Head of caudate nucleus (tissue), 42 donors: ENCODE measurements at regions of chr11 and their contacts with region 1.

Region 1: DNA sequence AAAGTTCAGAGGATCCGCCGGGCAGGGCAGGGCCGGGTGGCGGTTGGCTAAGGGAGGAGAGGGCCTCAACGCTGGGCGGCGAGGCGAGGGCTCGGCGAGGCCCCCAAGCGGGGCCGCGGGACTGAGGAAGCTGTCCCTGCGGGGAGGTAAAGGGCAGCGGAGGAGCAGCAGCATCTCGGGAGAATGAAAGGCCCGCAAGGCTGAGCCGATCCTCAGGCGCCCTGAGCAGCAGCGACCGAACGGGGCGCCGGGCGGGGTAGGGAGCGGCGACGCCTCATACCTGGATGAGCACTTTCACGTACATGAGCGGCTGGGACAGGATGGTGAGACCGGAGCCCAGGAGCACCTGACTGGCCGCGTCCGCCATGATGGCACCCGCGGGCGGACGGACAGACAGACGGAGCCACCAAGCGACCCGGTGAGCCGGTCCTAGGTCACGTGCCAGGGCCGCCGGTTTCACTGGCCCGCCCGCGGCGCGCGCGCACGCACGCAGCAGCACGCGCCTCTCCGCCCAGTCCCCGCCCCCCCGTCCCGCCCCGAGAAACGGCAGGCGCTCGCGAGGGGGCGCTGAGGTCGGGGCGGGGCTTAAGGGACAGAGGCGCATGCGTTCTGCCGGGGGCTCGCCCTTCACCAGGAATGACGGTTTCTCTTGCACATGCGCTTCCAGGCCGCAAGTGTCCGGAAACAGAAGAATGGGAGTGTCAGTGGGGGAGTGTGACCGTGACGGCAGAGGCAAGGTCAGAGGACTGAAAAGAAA is at the start of gene MTCH2:
- DNase-seq: peak; percentile 89 to 98 (median 94)

Region 2: DNA sequence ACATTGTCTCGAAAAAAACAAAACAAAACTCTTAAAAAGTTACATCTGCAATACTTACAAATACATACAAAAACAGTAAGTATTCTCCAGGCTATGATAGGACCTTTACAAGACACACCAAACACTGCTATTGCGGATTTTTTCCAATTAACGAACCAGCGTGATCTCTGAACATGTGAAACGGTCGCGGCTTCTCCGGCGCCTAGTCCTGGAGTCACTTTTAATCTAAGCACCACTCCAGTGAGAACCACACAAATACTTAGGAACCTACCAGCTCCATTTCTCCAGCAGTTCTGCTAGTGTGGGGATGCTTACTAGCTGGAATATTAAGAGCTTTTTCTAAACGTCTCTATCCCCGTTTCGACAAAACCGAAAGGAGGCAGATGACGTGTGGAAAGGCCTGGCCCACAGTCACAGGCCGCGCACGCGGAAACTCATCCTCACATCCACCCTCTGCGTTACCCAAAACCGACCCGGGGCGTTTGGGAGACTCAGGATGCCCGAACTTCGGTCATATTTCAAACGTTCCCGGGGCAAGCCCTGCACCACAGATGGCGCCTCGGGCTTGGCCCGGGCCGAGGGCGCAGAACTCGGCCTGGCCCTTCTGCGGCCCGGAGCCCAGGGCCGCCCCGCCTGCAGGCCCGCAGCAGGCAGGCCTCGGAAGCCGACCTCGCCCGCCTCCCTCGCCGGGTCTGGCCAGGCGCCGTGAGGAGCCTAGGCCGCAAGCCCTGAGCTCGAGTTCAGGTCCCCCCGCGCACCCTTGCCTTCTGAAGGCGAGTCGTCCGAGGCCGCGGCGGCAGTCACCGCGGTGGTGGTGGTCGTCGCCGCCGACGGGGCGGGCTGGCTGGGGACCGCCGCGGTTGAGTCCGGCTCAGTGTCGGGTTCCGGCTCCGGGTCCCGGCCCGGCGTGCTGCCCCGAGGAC is 124.3 kb after region 1 on chr11:
- intact Hi-C with region 1: loop called (anchors 5 kb)
- DNase-seq: peak; percentile 33 to 85 (median 71)

Region 3: DNA sequence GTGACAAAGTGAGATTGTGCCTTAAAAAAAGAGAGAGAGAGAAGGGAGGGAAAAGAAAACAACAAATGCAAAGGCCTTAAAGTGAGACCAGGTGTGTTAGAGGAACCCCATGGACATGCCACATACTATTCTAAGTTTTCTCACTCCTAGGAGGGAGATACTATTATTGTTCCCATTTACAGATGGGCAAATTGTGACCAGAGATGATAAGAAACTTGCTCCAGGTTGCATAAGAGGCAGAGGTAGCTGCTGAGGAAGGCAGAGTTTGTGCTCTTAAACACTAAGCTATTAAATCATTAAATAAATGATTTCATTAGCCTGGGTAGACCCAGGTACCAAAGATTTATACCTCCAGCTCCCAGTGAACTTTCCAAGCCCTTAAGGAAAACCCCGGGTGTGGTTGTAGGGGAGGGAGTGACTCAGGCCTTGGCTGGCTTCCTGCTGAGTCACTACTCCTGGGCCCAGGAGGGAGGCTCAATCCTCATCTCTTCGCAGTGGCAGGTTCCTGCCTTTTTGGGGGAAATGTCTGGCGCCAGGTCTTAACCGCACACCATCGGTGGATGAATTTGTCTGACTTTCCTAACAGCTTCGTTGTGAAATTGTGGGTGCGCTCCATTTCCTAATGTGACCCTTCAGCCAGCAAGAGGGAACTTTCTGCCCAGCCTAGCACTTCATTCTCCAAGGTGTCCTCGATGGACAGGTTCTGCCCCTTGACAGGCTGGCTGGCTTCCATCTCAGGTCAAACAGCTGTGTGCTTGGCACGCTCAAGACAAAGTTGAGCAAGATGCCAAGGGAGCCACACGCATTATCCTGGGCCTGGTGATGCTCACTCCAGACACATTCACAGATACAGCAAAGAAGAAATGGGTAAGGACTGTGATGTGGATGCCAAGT is 304.7 kb after region 1 on chr11:
- intact Hi-C with region 1: no loop called
- DNase-seq: peak in 27 of 42 donors; percentile 7 to 79 (median 37)